Calu3 (cell line): ENCODE measurements at regions of chr10 and their contacts with region 1.

Region 1: DNA sequence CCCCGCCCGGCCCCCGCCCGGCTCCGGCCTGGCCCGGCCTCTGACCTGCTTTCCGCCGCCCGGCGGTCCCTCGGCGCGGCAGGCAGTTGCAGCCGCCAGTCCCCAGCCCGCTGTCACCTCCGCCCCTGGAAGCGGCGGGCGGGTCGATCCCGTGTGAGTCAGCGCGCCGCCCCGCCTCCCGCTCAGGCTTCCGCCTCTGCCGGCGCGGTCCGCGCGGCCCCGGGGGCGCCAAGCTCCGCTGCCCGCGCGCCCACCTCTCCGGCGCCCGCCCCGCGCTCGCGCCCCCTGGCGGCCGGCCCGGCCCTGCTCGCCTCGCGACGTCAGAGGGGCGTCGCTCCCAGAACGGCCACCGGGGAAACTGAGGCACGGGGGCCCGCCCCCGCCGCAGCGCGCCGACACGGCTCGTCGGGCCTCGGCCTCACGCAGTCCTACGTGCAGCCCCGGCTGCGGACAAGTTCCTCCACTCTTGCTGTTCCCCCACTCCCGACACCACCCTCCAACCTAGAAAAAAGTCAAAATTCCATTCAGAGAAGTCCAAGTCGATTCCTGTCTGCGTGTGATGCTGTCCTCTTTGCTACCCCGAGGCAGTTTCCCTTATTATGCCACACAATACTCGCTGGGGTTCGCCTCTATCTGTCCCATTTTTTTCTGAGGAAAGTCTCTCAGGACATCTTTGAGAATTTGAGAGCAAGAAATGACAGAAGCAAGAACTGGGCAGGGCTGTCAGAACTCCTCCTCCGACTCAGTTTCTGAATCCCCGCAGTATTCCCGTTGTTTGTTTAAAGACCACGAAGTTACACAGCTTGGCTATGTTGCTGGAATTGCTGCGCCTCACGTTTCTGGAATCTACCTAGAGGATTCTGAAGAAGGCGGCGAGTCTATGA is at the start of gene DNMBP:
- DNase-seq: peak; percentile 85
- H3K4me3 Mint-ChIP-seq: peak within 1 kb of the TSS; percentile 74
- H3K27ac Mint-ChIP-seq: peak within 1 kb of the TSS; percentile 69
- H3K4me1 Mint-ChIP-seq: peaks cover 26% of the 10 kb centered on the region
- H3K27me3 Mint-ChIP-seq: no peaks in the 10 kb centered on the region
- CTCF ChIP-seq: peak; percentile 18
- total RNA-seq, gene DNMBP: 17.6 TPM in 2 replicates

Region 2: GRCh38 chr10:99906470-99906869 is 103.6 kb before region 1 on chr10:
- CTCF ChIA-PET with region 1: interaction called, 11 read pairs
- intact Hi-C with region 1: no loop called
- DNase-seq: peak; percentile 67
- H3K4me3 Mint-ChIP-seq: no peak overlapping the region
- H3K27ac Mint-ChIP-seq: peak overlapping the region; percentile 64
- H3K4me1 Mint-ChIP-seq: peaks cover 26% of the 10 kb centered on the region
- H3K27me3 Mint-ChIP-seq: no peaks in the 10 kb centered on the region
- CTCF ChIP-seq: no peak

Region 3: GRCh38 chr10:99926925-99927720 is 82.9 kb before region 1 on chr10:
- CTCF ChIA-PET with region 1: interaction called, 5 read pairs
- intact Hi-C with region 1: loop called (anchors 5 kb)
- DNase-seq: peak; percentile 46
- H3K4me3 Mint-ChIP-seq: peak overlapping the region; percentile 100
- H3K27ac Mint-ChIP-seq: peak overlapping the region; percentile 87
- H3K4me1 Mint-ChIP-seq: peaks cover 48% of the 10 kb centered on the region
- H3K27me3 Mint-ChIP-seq: no peaks in the 10 kb centered on the region
- CTCF ChIP-seq: no peak

Region 4: DNA sequence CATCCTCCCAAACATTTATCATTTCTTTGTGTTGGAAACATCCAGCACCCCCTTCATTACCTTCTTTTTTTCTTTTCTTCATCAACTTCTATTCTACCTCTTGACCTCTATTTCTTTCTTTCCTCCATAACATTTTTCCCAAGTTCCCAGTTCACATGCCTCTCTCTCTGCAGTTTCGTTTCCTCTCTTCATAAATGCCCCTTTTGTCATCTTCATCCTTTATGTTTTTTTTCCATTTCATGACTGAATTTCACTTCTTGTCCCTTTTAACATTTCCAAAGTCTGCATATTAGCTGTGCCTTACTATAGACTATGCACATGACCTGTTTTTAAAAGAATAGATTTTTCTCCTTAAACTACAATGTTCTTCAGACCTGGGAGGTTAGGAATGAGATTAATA is 47.9 kb after region 1 on chr10:
- CTCF ChIA-PET with region 1: no interaction called
- intact Hi-C with region 1: no loop called
- DNase-seq: no peak
- H3K4me3 Mint-ChIP-seq: no peak overlapping the region
- H3K27ac Mint-ChIP-seq: no peak overlapping the region
- H3K4me1 Mint-ChIP-seq: no peaks in the 10 kb centered on the region
- H3K27me3 Mint-ChIP-seq: no peaks in the 10 kb centered on the region
- CTCF ChIP-seq: no peak